ENCODE measurements at regions of chrX and their contacts with region 1.

Region 1: GRCh38 chrX:106467422-106467821 is 144.4 kb upstream of the RADX start:
- DNase-seq: no peak
- H3K4me3 ChIP-seq: no peak overlapping the region
- H3K27ac ChIP-seq: no peak overlapping the region
- H3K4me1 ChIP-seq: no peaks in the 10 kb centered on the region
- H3K27me3 ChIP-seq: peaks cover 0 to 49% of the 10 kb centered on the region in 2 donors
- CTCF ChIP-seq: no peak
- POLR2A ChIP-seq: no peak

Region 2: GRCh38 chrX:106906361-106906760 is 438.9 kb after region 1 on chrX:
- intact Hi-C with region 1: no loop called
- DNase-seq: no peak
- H3K4me3 ChIP-seq: no peak overlapping the region
- H3K27ac ChIP-seq: no peak overlapping the region
- H3K4me1 ChIP-seq: no peaks in the 10 kb centered on the region
- H3K27me3 ChIP-seq: peaks cover 0 to 66% of the 10 kb centered on the region in 2 donors
- CTCF ChIP-seq: no peak
- POLR2A ChIP-seq: no peak

Region 3: DNA sequence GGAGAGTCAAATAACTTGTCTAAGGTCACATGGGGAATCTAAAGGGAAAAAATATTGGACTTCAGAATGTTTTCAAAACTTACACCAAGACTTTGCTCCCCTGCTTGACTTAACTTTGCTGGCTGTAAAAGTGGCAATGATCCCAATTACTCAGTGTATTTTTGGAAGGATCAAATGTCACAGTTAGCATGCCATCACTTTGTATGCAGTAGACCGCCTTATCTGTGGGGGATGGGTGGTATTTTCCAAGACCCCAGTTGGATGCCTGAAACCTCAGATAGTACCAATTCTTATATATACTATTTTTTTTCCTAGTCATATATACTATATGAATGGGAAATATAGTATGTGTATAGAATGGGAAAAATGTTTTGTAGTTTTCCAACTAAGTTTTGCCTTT is 1917.4 kb after region 1 on chrX:
- intact Hi-C with region 1: loop called (anchors 10 kb)
- DNase-seq: no peak
- H3K4me3 ChIP-seq: no peak overlapping the region
- H3K27ac ChIP-seq: no peak overlapping the region
- H3K4me1 ChIP-seq: no peaks in the 10 kb centered on the region
- H3K27me3 ChIP-seq: peaks cover 0 to 3% of the 10 kb centered on the region in 2 donors
- CTCF ChIP-seq: no peak
- POLR2A ChIP-seq: no peak